Activated CD4-positive, alpha-beta memory T cell treated with anti-CD3 and anti-CD28 coated beads for 36 hours (primary cell): ENCODE measurements at regions of chr12 and their contacts with region 1.

Region 1: DNA sequence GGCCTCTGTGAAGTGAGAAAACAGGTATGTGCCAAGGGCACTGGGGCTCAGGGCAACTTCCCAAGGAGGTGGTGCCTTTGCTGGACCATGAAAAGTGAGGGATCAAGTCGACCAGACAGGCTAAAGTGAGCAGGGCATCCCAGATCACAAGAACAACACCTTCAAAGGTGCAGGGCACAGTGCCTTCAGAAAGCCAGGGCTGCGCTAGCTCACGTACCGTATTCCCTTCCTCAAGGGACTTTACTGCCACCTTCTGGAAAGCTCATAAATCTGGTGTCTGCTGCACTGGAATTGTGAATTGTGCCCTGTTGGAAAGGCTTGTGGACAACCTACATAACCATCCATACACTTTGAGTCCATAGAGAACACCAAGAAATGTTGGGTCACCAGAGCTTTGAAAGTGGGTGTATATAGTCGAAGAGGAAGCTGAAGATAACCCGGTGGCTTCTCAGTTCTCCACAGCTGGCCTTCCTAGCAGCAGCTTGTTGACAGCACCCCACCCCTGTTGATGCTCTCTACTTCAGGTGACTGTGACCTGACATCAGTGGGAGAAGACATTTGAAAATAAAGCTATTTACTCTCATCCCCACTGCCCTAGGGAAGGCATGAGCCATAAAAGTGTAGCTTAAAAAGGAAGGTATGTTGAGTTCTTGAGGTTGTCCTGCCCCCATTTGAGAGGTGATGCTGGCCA is 24.5 kb downstream of the FIGNL2 start:
- DNase-seq: peak; percentile 38
- H3K4me3 Mint-ChIP-seq: no peak overlapping the region
- H3K27ac Mint-ChIP-seq: no peak overlapping the region
- H3K4me1 Mint-ChIP-seq: peaks cover 37% of the 10 kb centered on the region
- H3K27me3 Mint-ChIP-seq: no peaks in the 10 kb centered on the region

Region 2: DNA sequence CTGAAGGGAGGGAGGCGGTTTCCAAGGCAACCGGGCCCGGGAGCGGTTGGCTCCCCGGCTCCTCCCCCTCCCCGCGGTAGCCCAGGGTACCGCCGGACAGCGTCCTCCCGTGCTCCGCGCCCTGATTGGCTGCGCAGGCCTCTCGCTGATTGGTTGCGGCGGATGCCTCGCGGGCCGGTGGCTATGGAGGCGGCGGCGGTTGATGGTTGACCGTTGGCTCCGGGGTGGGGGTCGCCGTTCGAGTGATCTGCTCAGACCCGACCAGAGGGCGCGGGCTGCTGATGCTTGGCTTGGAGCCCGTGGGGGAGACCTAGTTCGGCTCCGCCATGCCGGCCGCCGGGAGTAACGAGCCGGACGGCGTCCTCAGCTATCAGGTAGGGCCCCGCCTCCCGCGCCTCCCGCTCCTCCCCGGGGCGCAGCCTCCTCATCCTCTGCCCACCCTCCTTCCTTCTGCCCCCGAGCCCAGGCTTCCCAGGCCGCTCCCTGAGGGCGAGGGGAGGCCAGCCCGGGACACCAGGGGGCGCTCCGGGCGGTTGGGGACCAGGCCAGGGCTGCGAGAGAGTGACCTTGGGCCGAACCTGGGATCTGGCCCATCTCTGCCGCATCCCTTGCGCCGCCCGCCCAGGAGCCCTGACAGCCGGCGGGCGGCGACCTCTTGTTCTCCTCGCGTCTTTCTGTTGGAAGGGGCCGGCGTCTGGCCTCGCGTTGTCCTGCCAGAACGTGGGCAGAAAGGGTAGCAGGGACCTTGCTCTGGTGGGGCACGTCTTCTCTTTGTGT is 399.2 kb before region 1 on chr12 and contains the start of gene SLC4A8:
- CTCF ChIA-PET with region 1: interaction called, 8 read pairs
- POLR2A ChIA-PET with region 1: no interaction called
- intact Hi-C with region 1: loop called (anchors 2 kb)
- DNase-seq: peak; percentile 88
- H3K4me3 Mint-ChIP-seq: peak within 1 kb of the TSS; percentile 71
- H3K27ac Mint-ChIP-seq: no peak within 1 kb of the TSS
- H3K4me1 Mint-ChIP-seq: peaks cover 9% of the 10 kb centered on the region
- H3K27me3 Mint-ChIP-seq: no peaks in the 10 kb centered on the region
- total RNA-seq, gene SLC4A8: 1.8 to 3.7 TPM

Region 3: GRCh38 chr12:51475543-51475942 is 348.5 kb before region 1 on chr12:
- CTCF ChIA-PET with region 1: no interaction called
- POLR2A ChIA-PET with region 1: no interaction called
- intact Hi-C with region 1: no loop called
- DNase-seq: no peak
- H3K4me3 Mint-ChIP-seq: no peak overlapping the region
- H3K27ac Mint-ChIP-seq: no peak overlapping the region
- H3K4me1 Mint-ChIP-seq: peaks cover 10% of the 10 kb centered on the region
- H3K27me3 Mint-ChIP-seq: no peaks in the 10 kb centered on the region

Region 4: GRCh38 chr12:51590347-51591019 is 233.5 kb before region 1 on chr12:
- CTCF ChIA-PET with region 1: interaction called, 3 read pairs
- POLR2A ChIA-PET with region 1: no interaction called
- intact Hi-C with region 1: loop called (anchors 5 kb)
- DNase-seq: peak; percentile 82
- H3K4me3 Mint-ChIP-seq: peak overlapping the region; percentile 73
- H3K27ac Mint-ChIP-seq: peak overlapping the region; percentile 29
- H3K4me1 Mint-ChIP-seq: peaks cover 13% of the 10 kb centered on the region
- H3K27me3 Mint-ChIP-seq: peaks cover 48% of the 10 kb centered on the region

Region 5: DNA sequence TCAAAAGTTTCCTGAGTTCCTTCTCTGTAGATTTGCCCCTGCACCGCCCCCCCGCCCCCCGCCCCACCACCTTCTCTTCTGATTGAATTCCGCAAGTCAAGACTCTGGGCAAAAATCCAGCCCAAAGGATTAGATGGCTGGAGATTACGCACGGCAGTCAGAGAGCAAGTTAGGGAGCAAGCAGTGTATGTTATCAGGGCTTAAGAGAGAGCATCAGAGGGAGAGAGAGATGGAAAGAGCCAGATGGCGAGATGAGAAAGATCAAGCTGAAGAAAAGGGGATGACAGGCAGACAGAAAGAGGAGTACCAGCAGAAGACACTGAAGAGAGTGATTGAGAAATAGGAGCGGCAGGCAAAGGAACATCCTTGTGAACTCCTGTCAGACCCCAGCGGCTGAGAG is 50.0 kb after region 1 on chr12:
- CTCF ChIA-PET with region 1: interaction called, 18 read pairs
- POLR2A ChIA-PET with region 1: interaction called, 3 read pairs
- intact Hi-C with region 1: loop called (anchors 5 kb)
- DNase-seq: no peak
- H3K4me3 Mint-ChIP-seq: no peak overlapping the region
- H3K27ac Mint-ChIP-seq: no peak overlapping the region
- H3K4me1 Mint-ChIP-seq: peaks cover 5% of the 10 kb centered on the region
- H3K27me3 Mint-ChIP-seq: peaks cover 17% of the 10 kb centered on the region

Region 6: DNA sequence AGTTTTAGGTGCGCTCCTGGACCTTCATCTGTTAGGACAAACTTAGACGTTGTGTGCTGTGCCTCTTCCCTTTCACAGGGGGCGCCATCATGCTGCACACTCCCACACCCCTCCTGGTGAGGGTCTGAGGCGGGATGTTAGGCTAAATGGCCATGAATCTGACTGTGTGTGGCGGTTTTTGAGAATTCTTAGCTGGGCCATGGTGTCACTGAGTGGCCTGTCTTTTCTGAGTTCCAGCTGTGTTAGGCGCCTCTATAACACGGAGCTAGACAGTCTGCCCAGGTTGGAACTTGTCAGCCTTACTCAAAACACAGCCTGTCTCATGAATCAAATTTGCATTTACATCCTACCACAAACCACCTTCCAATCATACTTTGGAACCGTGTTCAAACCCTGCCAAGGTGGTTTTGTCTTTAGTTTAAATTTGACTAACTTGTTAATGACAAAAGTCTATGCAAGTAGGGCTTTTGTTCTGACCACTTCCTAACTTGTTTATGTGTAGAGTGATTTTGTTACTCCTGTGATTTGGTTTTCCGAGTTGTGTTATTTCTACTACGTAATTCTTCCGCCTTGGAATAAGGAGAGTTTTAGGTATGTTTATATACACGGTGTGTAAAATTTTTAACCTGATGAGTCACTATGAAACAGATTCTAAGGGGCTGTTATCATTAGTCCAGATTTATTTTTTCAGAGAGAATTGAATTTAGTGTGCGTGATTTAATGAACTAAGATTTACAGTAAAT is 147.1 kb after region 1 on chr12:
- CTCF ChIA-PET with region 1: interaction called, 4 read pairs
- POLR2A ChIA-PET with region 1: interaction called, 4 read pairs
- intact Hi-C with region 1: loop called (anchors 1 kb)
- DNase-seq: peak; percentile 75
- H3K4me3 Mint-ChIP-seq: peak overlapping the region; percentile 67
- H3K27ac Mint-ChIP-seq: peak overlapping the region; percentile 66
- H3K4me1 Mint-ChIP-seq: peaks cover 61% of the 10 kb centered on the region
- H3K27me3 Mint-ChIP-seq: peaks cover 6% of the 10 kb centered on the region